Naive thymus-derived CD4-positive, alpha-beta T cell (primary cell): ENCODE measurements at regions of chr10 and their contacts with region 1.

Region 1: GRCh38 chr10:100373298-100374136 is 26.5 kb downstream of the SCD start:
- DNase-seq: peak; percentile 52 to 91 (median 72)
- ATAC-seq: peak; percentile 89
- H3K4me3 ChIP-seq: peak overlapping the region; percentile 96
- H3K4me3 Mint-ChIP-seq: no peak overlapping the region
- H3K27ac ChIP-seq: peak overlapping the region; percentile 85
- H3K27ac Mint-ChIP-seq: no peak overlapping the region
- H3K4me1 ChIP-seq: peaks cover 32 to 41% of the 10 kb centered on the region in 2 donors
- H3K4me1 Mint-ChIP-seq: peaks cover 14 to 39% (median 27%) of the 10 kb centered on the region in 7 donors
- H3K27me3 ChIP-seq: no peaks in the 10 kb centered on the region
- H3K27me3 Mint-ChIP-seq: no peaks in the 10 kb centered on the region

Region 2: GRCh38 chr10:99827936-99828335 is 545.6 kb before region 1 on chr10:
- CTCF ChIA-PET with region 1: no interaction called
- POLR2A ChIA-PET with region 1: no interaction called
- intact Hi-C with region 1: no loop called
- DNase-seq: no peak
- ATAC-seq: no peak
- H3K4me3 ChIP-seq: no peak overlapping the region
- H3K4me3 Mint-ChIP-seq: no peak overlapping the region
- H3K27ac ChIP-seq: no peak overlapping the region
- H3K27ac Mint-ChIP-seq: no peak overlapping the region
- H3K4me1 ChIP-seq: peaks cover 0 to 5% of the 10 kb centered on the region in 2 donors
- H3K4me1 Mint-ChIP-seq: peaks cover 0 to 8% (median 0%) of the 10 kb centered on the region in 7 donors
- H3K27me3 ChIP-seq: no peaks in the 10 kb centered on the region
- H3K27me3 Mint-ChIP-seq: no peaks in the 10 kb centered on the region

Region 3: GRCh38 chr10:100229819-100230422 is 143.6 kb before region 1 on chr10:
- CTCF ChIA-PET with region 1: no interaction called
- POLR2A ChIA-PET with region 1: no interaction called
- intact Hi-C with region 1: loop called in 1 of 2 experiments (anchors 2 kb)
- DNase-seq: no peak
- ATAC-seq: no peak
- H3K4me3 ChIP-seq: peak overlapping the region; percentile 99
- H3K4me3 Mint-ChIP-seq: peak overlapping the region; percentile 85 to 98 (median 91)
- H3K27ac ChIP-seq: peak overlapping the region; percentile 83
- H3K27ac Mint-ChIP-seq: peak overlapping the region; percentile 75 to 97 (median 85)
- H3K4me1 ChIP-seq: peaks cover 0 to 8% of the 10 kb centered on the region in 2 donors
- H3K4me1 Mint-ChIP-seq: peaks cover 16 to 44% (median 36%) of the 10 kb centered on the region in 7 donors
- H3K27me3 ChIP-seq: no peaks in the 10 kb centered on the region
- H3K27me3 Mint-ChIP-seq: no peaks in the 10 kb centered on the region

Region 4: DNA sequence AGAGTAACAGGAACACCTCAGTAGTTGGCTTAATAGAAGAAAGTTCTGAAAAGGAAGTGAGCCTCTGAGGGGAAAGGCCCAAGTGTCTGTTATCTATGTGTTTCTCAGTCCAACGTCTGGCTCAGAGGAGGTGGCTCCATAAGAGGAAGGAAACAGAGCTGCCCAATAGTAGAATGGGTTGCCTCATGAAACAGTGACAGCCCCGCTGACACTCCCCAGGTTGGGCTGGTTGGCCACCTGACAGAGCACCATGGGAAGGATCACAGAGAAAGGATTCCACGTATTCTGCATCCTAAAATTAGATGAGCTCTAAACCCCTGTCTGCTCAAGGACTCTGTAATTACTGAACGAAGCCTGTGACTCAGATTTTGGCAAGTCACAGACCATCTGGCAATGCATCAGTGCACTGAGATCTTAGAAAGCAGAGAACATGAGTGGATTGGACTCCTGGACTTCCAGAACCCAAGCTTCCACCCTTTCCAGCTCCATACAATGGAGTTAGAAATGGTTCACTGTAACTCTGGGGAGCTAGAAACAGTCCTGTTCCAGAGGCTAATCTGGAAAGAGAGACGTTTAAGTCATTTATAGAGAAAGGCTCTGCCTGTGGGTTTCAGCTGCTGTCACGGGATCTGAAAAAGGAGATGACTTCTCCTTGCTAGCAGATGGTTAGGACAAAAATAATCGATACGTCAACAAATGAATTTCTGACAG is 46.4 kb before region 1 on chr10:
- CTCF ChIA-PET with region 1: no interaction called
- POLR2A ChIA-PET with region 1: no interaction called
- intact Hi-C with region 1: loop called in 1 of 2 experiments (anchors 1 kb)
- DNase-seq: peak in 5 of 9 donors; percentile 18 to 36 (median 25)
- ATAC-seq: peak; percentile 95
- H3K4me3 ChIP-seq: no peak overlapping the region
- H3K4me3 Mint-ChIP-seq: peak overlapping the region in 1 of 10 donors; percentile 23
- H3K27ac ChIP-seq: no peak overlapping the region
- H3K27ac Mint-ChIP-seq: peak overlapping the region in 5 of 9 donors; percentile 30 to 89 (median 37)
- H3K4me1 ChIP-seq: peaks cover 0 to 3% of the 10 kb centered on the region in 2 donors
- H3K4me1 Mint-ChIP-seq: peaks cover 3 to 16% (median 12%) of the 10 kb centered on the region in 7 donors
- H3K27me3 ChIP-seq: no peaks in the 10 kb centered on the region
- H3K27me3 Mint-ChIP-seq: peaks cover 0 to 18% (median 5%) of the 10 kb centered on the region in 5 donors

Region 5: GRCh38 chr10:100346765-100347567 is 26.6 kb before region 1 on chr10 and contains the start of gene SCD:
- CTCF ChIA-PET with region 1: interaction called, 7 read pairs
- POLR2A ChIA-PET with region 1: interaction called, 10 read pairs
- intact Hi-C with region 1: loop called (anchors 1 kb)
- DNase-seq: peak; percentile 41 to 86 (median 58)
- ATAC-seq: peak; percentile 93
- H3K4me3 ChIP-seq: peak within 1 kb of the TSS; percentile 67
- H3K4me3 Mint-ChIP-seq: peak within 1 kb of the TSS; percentile 84 to 98 (median 90)
- H3K27ac ChIP-seq: peak within 1 kb of the TSS; percentile 48
- H3K27ac Mint-ChIP-seq: peak within 1 kb of the TSS in 8 of 9 donors; percentile 19 to 87 (median 68)
- H3K4me1 ChIP-seq: peaks cover 5 to 10% of the 10 kb centered on the region in 2 donors
- H3K4me1 Mint-ChIP-seq: peaks cover 15 to 69% (median 27%) of the 10 kb centered on the region in 7 donors
- H3K27me3 ChIP-seq: no peaks in the 10 kb centered on the region
- H3K27me3 Mint-ChIP-seq: peaks cover 0 to 8% (median 0%) of the 10 kb centered on the region in 5 donors
- total RNA-seq, gene SCD: 1.1 to 121 (median 2.3) TPM

Region 6: DNA sequence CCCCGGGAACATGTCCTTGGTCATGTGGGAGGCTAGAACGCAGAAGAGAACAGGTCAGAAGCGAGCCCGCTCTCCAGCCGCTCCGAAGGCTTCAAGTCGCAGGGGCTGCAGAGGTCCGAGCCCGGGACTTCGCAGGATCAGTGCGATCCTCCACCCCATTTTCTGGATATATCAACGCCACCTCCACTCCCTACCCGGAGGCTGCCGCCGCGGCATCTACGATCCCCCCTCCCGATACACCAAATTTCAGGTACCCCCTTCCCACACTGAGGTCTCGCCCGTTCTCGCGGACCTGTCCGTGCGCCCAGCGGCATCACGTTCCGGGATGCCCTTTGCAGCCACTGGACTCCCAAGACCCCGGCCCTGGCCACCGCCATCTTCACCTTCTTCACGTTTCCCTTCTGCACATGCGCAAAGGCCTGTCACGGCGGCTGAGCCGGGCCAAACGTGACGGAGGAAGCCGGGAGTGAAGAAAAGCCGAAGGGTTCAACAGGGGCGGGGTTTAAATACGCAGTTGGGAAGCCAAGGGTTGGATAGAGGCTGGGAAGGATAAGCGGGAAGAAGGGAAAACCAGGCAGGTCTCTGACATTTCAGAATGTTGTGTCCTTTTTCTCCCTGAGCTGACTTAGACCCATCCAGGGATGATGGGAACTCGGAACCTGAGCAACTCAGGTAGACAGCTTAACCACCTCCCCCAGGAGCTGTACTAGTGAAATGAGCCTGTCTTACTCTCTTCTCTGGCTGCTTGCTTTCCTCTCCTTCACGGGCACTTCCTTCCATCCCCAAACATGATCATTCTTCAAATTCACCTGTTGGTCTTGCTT is 156.2 kb after region 1 on chr10 and contains the start of gene NDUFB8:
- CTCF ChIA-PET with region 1: no interaction called
- POLR2A ChIA-PET with region 1: no interaction called
- intact Hi-C with region 1: loop called in 1 of 2 experiments (anchors 2 kb)
- DNase-seq: peak; percentile 78 to 90 (median 85)
- ATAC-seq: peak; percentile 85
- H3K4me3 ChIP-seq: peak within 1 kb of the TSS; percentile 93
- H3K4me3 Mint-ChIP-seq: peak within 1 kb of the TSS; percentile 90 to 100 (median 98)
- H3K27ac ChIP-seq: peak within 1 kb of the TSS; percentile 89
- H3K27ac Mint-ChIP-seq: peak within 1 kb of the TSS; percentile 90 to 100 (median 98)
- H3K4me1 ChIP-seq: peaks cover 20 to 31% of the 10 kb centered on the region in 2 donors
- H3K4me1 Mint-ChIP-seq: peaks cover 14 to 46% (median 33%) of the 10 kb centered on the region in 7 donors
- H3K27me3 ChIP-seq: no peaks in the 10 kb centered on the region
- H3K27me3 Mint-ChIP-seq: no peaks in the 10 kb centered on the region
- total RNA-seq, gene NDUFB8: 137 to 304 (median 142) TPM

Region 7: GRCh38 chr10:100621360-100622205 is 248.1 kb after region 1 on chr10:
- CTCF ChIA-PET with region 1: no interaction called
- POLR2A ChIA-PET with region 1: no interaction called
- intact Hi-C with region 1: no loop called
- DNase-seq: peak in 7 of 9 donors; percentile 18 to 64 (median 50)
- ATAC-seq: peak; percentile 58
- H3K4me3 ChIP-seq: no peak overlapping the region
- H3K4me3 Mint-ChIP-seq: peak overlapping the region in 9 of 10 donors; percentile 36 to 74 (median 66)
- H3K27ac ChIP-seq: no peak overlapping the region
- H3K27ac Mint-ChIP-seq: peak overlapping the region in 1 of 9 donors; percentile 66
- H3K4me1 ChIP-seq: no peaks in the 10 kb centered on the region
- H3K4me1 Mint-ChIP-seq: peaks cover 0 to 6% (median 0%) of the 10 kb centered on the region in 7 donors
- H3K27me3 ChIP-seq: peaks cover 0 to 10% of the 10 kb centered on the region in 2 donors
- H3K27me3 Mint-ChIP-seq: peaks cover 65 to 76% (median 68%) of the 10 kb centered on the region in 5 donors